Activated naive CD4-positive, alpha-beta T cell treated with anti-CD3 and anti-CD28 coated beads for 36 hours (primary cell): ENCODE measurements at regions of chr2 and their contacts with region 1.

Region 1: GRCh38 chr2:126527836-126528507 is 128.0 kb upstream of the GYPC start:
- DNase-seq: peak; percentile 83
- H3K4me3 Mint-ChIP-seq: no peak overlapping the region
- H3K27ac Mint-ChIP-seq: no peak overlapping the region
- H3K4me1 Mint-ChIP-seq: no peaks in the 10 kb centered on the region
- H3K27me3 Mint-ChIP-seq: no peaks in the 10 kb centered on the region

Region 2: DNA sequence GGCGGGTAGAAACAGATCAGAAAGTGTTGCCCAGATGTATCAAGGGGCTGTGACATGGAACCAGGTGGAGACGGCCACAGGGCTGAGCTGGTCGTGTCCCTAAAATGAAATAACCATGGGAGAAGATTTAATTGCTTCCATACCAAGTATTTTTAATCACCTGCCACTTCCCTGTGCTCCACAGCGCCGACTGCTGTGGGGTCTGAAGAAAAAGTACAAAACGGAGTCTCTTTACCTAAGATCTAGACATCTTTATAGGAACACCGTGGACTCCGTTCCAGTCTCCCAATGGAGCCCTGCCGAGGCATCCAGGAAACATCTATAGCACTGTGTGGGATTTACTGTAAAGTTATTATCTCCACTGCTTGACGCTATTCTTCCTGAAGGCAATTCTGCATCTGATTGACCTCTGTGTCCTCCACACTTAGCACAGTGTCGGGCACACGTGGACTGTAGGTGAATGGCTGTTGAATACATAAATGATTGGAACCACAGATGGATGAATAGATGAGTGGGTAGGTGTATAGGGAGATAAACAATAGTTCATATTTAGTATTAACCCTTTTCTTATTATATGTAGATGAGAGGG is 106.4 kb after region 1 on chr2:
- CTCF ChIA-PET with region 1: interaction called, 4 read pairs
- intact Hi-C with region 1: loop called (anchors 2 kb)
- DNase-seq: peak; percentile 45
- H3K4me3 Mint-ChIP-seq: no peak overlapping the region
- H3K27ac Mint-ChIP-seq: no peak overlapping the region
- H3K4me1 Mint-ChIP-seq: no peaks in the 10 kb centered on the region
- H3K27me3 Mint-ChIP-seq: no peaks in the 10 kb centered on the region

Region 3: GRCh38 chr2:126749537-126749936 is 221.6 kb after region 1 on chr2:
- CTCF ChIA-PET with region 1: interaction called, 6 read pairs
- intact Hi-C with region 1: loop called (anchors 2 kb)
- DNase-seq: peak; percentile 44
- H3K4me3 Mint-ChIP-seq: no peak overlapping the region
- H3K27ac Mint-ChIP-seq: no peak overlapping the region
- H3K4me1 Mint-ChIP-seq: peaks cover 4% of the 10 kb centered on the region
- H3K27me3 Mint-ChIP-seq: no peaks in the 10 kb centered on the region

Region 4: DNA sequence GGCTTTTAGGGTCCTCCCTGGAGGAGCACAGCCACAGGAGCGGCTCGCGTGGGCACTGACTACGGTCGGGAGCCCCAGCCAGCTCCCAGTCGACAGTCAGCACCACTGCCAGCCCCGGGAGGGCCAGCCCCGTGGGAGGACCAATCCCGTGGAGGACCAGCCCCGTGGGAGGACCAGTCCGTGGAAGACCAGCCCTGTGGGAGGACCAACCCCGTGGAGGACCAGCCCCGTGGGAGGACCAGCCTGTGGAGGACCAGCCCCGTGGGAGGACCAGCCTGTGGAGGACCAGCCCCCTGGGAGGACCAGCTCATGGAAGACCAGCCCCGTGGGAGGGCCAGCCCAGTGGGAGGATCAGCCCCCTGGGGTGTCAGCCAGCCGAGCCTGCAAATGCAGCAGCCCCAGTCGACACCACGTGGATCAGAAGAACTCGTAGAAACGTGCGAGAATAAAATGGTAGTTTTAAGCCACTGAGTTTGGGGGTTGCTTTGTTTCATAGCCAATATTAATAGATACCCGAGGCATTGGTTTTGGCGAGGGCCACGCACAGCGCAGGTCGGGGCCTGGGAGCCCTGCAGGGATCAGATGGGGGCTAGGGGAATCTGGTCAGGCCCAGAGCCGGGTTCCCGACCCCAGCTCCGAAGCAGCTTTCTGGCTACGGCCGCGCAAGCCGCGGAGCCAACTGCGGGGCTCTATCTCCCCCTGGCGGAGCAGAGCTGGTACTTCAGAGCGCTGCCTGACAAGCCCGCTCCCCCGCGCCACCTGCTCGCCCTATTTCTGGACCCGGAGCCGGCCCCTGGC is 443.7 kb after region 1 on chr2:
- CTCF ChIA-PET with region 1: interaction called, 16 read pairs
- intact Hi-C with region 1: loop called (anchors 1 kb)
- DNase-seq: peak; percentile 74
- H3K4me3 Mint-ChIP-seq: peak overlapping the region; percentile 47
- H3K27ac Mint-ChIP-seq: no peak overlapping the region
- H3K4me1 Mint-ChIP-seq: peaks cover 2% of the 10 kb centered on the region
- H3K27me3 Mint-ChIP-seq: peaks cover 28% of the 10 kb centered on the region